ENCODE measurements at regions of chr6 and their contacts with region 1.

Region 1: GRCh38 chr6:70413114-70413991 is at the start of gene FAM135A:
- DNase-seq: peak; percentile 99
- H3K4me3 ChIP-seq: peak within 1 kb of the TSS; percentile 64
- H3K4me3 Mint-ChIP-seq: peak within 1 kb of the TSS; percentile 94
- H3K27ac Mint-ChIP-seq: peak within 1 kb of the TSS; percentile 76
- H3K4me1 ChIP-seq: peaks cover 26% of the 10 kb centered on the region
- H3K4me1 Mint-ChIP-seq: peaks cover 8% of the 10 kb centered on the region
- H3K27me3 ChIP-seq: no peaks in the 10 kb centered on the region
- H3K27me3 Mint-ChIP-seq: no peaks in the 10 kb centered on the region
- CTCF ChIP-seq: no peak
- total RNA-seq, gene FAM135A: 18.7 and 21.4 TPM in 2 replicates

Region 2: GRCh38 chr6:70289299-70289698 is 124.1 kb before region 1 on chr6:
- CTCF ChIA-PET with region 1: no interaction called
- POLR2A ChIA-PET with region 1: no interaction called
- intact Hi-C with region 1: no loop called
- DNase-seq: no peak
- H3K4me3 ChIP-seq: no peak overlapping the region
- H3K4me3 Mint-ChIP-seq: no peak overlapping the region
- H3K27ac Mint-ChIP-seq: no peak overlapping the region
- H3K4me1 ChIP-seq: no peaks in the 10 kb centered on the region
- H3K4me1 Mint-ChIP-seq: no peaks in the 10 kb centered on the region
- H3K27me3 ChIP-seq: no peaks in the 10 kb centered on the region
- H3K27me3 Mint-ChIP-seq: peaks cover 2% of the 10 kb centered on the region
- CTCF ChIP-seq: peak; percentile 10 to 27

Region 3: GRCh38 chr6:70310063-70310694 is 103.2 kb before region 1 on chr6:
- CTCF ChIA-PET with region 1: interaction called, 14 read pairs
- POLR2A ChIA-PET with region 1: no interaction called
- intact Hi-C with region 1: no loop called
- DNase-seq: peak in 1 of 2 experiments; percentile 39
- H3K4me3 ChIP-seq: no peak overlapping the region
- H3K4me3 Mint-ChIP-seq: no peak overlapping the region
- H3K27ac Mint-ChIP-seq: no peak overlapping the region
- H3K4me1 ChIP-seq: no peaks in the 10 kb centered on the region
- H3K4me1 Mint-ChIP-seq: peaks cover 6% of the 10 kb centered on the region
- H3K27me3 ChIP-seq: no peaks in the 10 kb centered on the region
- H3K27me3 Mint-ChIP-seq: peaks cover 13% of the 10 kb centered on the region
- CTCF ChIP-seq: peak; percentile 19 to 52

Region 4: GRCh38 chr6:70398783-70399728 is 14.3 kb before region 1 on chr6:
- CTCF ChIA-PET with region 1: interaction called, 8 read pairs
- POLR2A ChIA-PET with region 1: interaction called, 36 read pairs
- intact Hi-C with region 1: loop called (anchors 1 kb)
- DNase-seq: peak; percentile 63 to 74
- H3K4me3 ChIP-seq: no peak overlapping the region
- H3K4me3 Mint-ChIP-seq: peak overlapping the region; percentile 60
- H3K27ac Mint-ChIP-seq: peak overlapping the region; percentile 71
- H3K4me1 ChIP-seq: peaks cover 22% of the 10 kb centered on the region
- H3K4me1 Mint-ChIP-seq: peaks cover 25% of the 10 kb centered on the region
- H3K27me3 ChIP-seq: no peaks in the 10 kb centered on the region
- H3K27me3 Mint-ChIP-seq: no peaks in the 10 kb centered on the region
- CTCF ChIP-seq: no peak

Region 5: DNA sequence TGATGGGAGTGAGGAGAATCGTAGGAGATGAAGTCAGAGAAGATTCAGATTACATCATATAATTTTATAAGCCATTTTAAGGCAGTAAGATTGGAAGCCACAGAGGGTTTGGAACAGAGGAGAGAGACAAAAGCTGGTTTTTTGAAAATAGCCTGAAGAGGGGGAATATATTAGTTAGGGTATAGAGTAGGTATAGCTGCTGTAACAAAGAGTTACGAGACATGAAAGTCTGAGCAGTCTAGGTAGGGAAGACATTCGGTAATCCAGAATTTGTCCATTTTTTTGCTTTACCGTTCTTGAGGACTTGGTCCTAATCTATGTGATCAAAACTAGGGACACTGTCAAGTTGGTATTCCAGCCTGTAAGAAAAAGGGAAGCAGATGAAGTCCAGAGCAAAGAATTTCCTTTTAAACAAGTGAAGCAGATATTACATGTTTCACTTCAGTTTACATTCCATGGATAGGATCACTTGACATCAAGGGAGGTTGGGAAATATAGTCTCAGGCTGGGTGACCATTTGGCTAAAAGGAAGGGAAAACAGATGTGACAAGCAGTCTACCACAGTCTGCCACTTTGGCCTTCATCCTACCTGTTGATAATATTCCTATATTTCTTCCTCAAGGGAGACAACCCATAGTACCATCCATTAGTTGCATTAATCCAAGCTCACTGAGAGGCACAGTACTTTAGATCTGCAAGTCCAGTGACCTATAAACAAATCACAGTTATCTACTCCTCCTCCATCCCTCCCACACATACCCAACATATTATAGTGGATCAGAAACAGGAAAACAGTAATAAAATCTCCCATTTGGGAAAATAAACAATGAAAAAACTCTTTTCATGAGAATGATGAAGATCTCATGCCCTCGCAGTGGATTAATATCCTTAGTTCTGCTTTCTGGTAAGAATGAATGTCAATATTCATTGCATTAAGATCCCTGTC is 10.1 kb after region 1 on chr6:
- CTCF ChIA-PET with region 1: interaction called, 3 read pairs
- POLR2A ChIA-PET with region 1: interaction called, 12 read pairs
- intact Hi-C with region 1: loop called (anchors 1 kb)
- DNase-seq: no peak
- H3K4me3 ChIP-seq: no peak overlapping the region
- H3K4me3 Mint-ChIP-seq: no peak overlapping the region
- H3K27ac Mint-ChIP-seq: no peak overlapping the region
- H3K4me1 ChIP-seq: peaks cover 6% of the 10 kb centered on the region
- H3K4me1 Mint-ChIP-seq: no peaks in the 10 kb centered on the region
- H3K27me3 ChIP-seq: no peaks in the 10 kb centered on the region
- H3K27me3 Mint-ChIP-seq: no peaks in the 10 kb centered on the region
- CTCF ChIP-seq: no peak

Region 6: GRCh38 chr6:70667711-70668498 is 254.6 kb after region 1 on chr6 and contains the start of gene SMAP1:
- CTCF ChIA-PET with region 1: no interaction called
- POLR2A ChIA-PET with region 1: interaction called, 7 read pairs
- intact Hi-C with region 1: loop called (anchors 1 kb)
- DNase-seq: peak; percentile 94 to 97
- H3K4me3 ChIP-seq: peak within 1 kb of the TSS; percentile 96
- H3K4me3 Mint-ChIP-seq: peak within 1 kb of the TSS; percentile 82
- H3K27ac Mint-ChIP-seq: peak within 1 kb of the TSS; percentile 74
- H3K4me1 ChIP-seq: peaks cover 14% of the 10 kb centered on the region
- H3K4me1 Mint-ChIP-seq: peaks cover 13% of the 10 kb centered on the region
- H3K27me3 ChIP-seq: no peaks in the 10 kb centered on the region
- H3K27me3 Mint-ChIP-seq: no peaks in the 10 kb centered on the region
- CTCF ChIP-seq: no peak
- total RNA-seq, gene SMAP1: 36.1 and 36.2 TPM in 2 replicates

Measured in Caco-2 (cell line).